H1 (cell line): ENCODE measurements at regions of chr20 and their contacts with region 1.

Region 1: DNA sequence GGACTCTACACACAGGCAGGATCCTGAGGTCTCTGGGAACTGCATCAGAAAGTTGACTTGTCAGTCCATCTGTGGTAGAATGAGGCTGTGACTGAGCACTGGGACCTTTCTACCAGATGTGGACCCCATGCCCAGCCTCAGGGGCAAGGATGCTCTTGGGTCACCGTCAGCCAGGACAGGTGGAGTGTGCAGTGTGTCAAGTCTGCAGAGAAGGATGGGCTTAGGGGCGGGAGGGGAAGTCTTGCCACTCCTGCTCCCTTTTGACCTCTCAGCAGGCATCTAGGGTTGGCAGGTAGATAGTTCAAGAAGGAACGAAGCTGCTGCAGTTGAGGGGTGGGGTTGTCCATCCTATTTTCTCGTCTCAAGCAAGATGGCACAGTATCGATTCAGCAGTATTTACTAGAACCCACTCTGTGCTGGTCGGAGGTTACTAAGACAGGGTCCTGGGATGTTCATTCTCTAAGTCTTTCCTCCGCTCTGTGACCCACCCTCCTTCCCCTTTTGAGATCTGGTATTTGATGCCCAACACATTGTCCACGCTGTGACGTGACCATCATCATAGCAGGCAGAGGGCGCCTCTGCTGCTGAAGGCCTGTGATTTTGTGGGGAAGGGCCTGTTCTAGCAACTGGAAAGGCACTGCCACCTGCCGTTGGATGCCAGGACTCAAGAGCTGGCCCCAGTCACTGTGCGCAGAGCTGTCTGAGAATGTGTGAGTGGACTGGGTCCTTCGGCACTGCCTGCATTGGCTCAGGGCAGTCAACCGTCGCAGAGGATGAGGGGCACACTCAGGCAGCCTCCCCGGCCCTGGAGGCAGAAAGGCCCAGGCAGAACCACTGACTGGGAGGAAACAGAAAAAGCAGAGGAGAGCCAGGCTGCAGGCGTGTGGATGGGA is 23.2 kb downstream of the RBCK1 start:
- DNase-seq: no peak
- H3K4me3 ChIP-seq: no peak overlapping the region
- H3K27ac ChIP-seq: no peak overlapping the region
- H3K4me1 ChIP-seq: peaks cover 0 to 13% (median 5%) of the 10 kb centered on the region in 4 experiments; a peak in 6 of 7 replicates
- H3K27me3 ChIP-seq: peaks cover 0 to 11% (median 3%) of the 10 kb centered on the region in 4 experiments; a peak in 4 of 7 replicates
- CTCF ChIP-seq: peak; percentile 71 to 96 (median 89)
- EP300 ChIP-seq: no peak
- POLR2A ChIP-seq: no peak
- RAD21 ChIP-seq: peak; percentile 68 to 79

Region 2: GRCh38 chr20:354298-355064 is 76.8 kb before region 1 on chr20:
- CTCF ChIA-PET with region 1: interaction called, 52 read pairs
- POLR2A ChIA-PET with region 1: interaction called, 3 read pairs
- DNase-seq: peak in 1 of 2 experiments; percentile 92
- H3K4me3 ChIP-seq: no peak overlapping the region
- H3K27ac ChIP-seq: no peak overlapping the region
- H3K4me1 ChIP-seq: peaks cover 0 to under 1% (median 0%) of the 10 kb centered on the region in 4 experiments; a peak in 1 of 7 replicates
- H3K27me3 ChIP-seq: no peaks in the 10 kb centered on the region
- CTCF ChIP-seq: peak; percentile 87 to 98 (median 96)
- EP300 ChIP-seq: no peak
- POLR2A ChIP-seq: no peak
- RAD21 ChIP-seq: peak; percentile 97

Region 3: GRCh38 chr20:362271-363254 is 68.7 kb before region 1 on chr20:
- CTCF ChIA-PET with region 1: interaction called, 20 read pairs
- POLR2A ChIA-PET with region 1: interaction called, 3 read pairs
- DNase-seq: no peak
- H3K4me3 ChIP-seq: no peak overlapping the region
- H3K27ac ChIP-seq: no peak overlapping the region
- H3K4me1 ChIP-seq: no peaks in the 10 kb centered on the region; a peak in 2 of 7 replicates
- H3K27me3 ChIP-seq: no peaks in the 10 kb centered on the region
- CTCF ChIP-seq: peak; percentile 44 to 54 (median 49)
- EP300 ChIP-seq: no peak
- POLR2A ChIP-seq: no peak
- RAD21 ChIP-seq: peak; percentile 44 to 58

Region 4: DNA sequence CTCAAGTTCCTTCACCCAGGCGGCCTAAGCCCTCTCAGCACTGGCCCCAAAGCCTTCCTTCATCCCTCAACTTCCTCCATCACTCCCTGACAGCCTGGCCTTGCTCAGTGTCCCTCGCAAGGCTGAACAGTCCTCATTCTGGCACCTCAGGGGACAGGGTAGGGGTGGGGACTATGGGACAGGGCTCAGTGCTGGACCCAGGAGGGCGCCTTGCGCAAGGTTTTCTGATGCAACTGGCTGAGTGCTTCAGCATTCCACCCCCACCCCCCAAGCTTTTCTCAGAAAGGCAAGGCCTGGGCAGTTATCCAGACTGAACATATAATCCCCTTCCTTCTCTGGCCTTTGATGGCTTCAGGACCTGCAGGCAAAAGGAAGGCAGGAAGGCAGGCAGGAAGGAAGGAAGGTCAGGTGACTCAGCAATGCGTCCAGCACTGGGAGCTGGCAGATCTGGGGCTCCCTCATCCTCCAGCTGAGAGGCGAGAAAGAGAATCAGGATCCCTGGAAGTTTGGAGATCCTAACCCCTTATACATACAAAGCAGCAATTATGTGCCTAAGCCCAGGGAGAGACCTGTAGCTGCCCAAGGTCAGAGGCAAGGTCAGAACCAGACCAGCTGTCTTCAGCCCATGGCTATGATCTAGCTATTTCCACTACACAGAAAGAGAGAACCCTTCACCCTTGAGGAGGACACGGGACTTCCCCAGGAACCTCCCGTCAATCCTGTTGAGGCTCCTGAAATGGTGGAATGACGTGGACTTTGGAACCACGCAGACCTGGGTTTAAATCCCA is 59.3 kb before region 1 on chr20:
- CTCF ChIA-PET with region 1: interaction called, 13 read pairs
- POLR2A ChIA-PET with region 1: no interaction called
- DNase-seq: no peak
- H3K4me3 ChIP-seq: no peak overlapping the region
- H3K27ac ChIP-seq: no peak overlapping the region
- H3K4me1 ChIP-seq: peaks cover 0 to 5% (median 0%) of the 10 kb centered on the region in 4 experiments; a peak in 2 of 7 replicates
- H3K27me3 ChIP-seq: no peaks in the 10 kb centered on the region; a peak in 1 of 7 replicates
- CTCF ChIP-seq: no peak
- EP300 ChIP-seq: no peak
- POLR2A ChIP-seq: no peak
- RAD21 ChIP-seq: no peak

Region 5: GRCh38 chr20:462199-462991 is 31.1 kb after region 1 on chr20 and contains the start of gene TBC1D20:
- CTCF ChIA-PET with region 1: interaction called, 8 read pairs
- POLR2A ChIA-PET with region 1: interaction called, 11 read pairs
- DNase-seq: peak; percentile 49 to 86
- H3K4me3 ChIP-seq: peak within 1 kb of the TSS; percentile 70 to 86 (median 82)
- H3K27ac ChIP-seq: peak within 1 kb of the TSS; percentile 41; the same call in 1 of the 2 replicates
- H3K4me1 ChIP-seq: peaks cover 0 to 4% (median 1%) of the 10 kb centered on the region in 4 experiments; a peak in 3 of 7 replicates
- H3K27me3 ChIP-seq: peaks cover 0 to 9% (median 7%) of the 10 kb centered on the region in 4 experiments; a peak in 3 of 7 replicates
- CTCF ChIP-seq: peak in 1 of 3 experiments; percentile 18; a peak in 1 of 4 replicates
- EP300 ChIP-seq: no peak; a peak in 1 of 3 replicates
- POLR2A ChIP-seq: peak; percentile 68 to 85; a peak in 2 of 3 replicates
- RAD21 ChIP-seq: no peak
- total RNA-seq, gene TBC1D20: 16.2 and 17.1 TPM in 2 replicates

Region 6: GRCh38 chr20:478949-479429 is 47.7 kb after region 1 on chr20:
- CTCF ChIA-PET with region 1: interaction called, 17 read pairs
- POLR2A ChIA-PET with region 1: interaction called, 5 read pairs
- DNase-seq: no peak
- H3K4me3 ChIP-seq: no peak overlapping the region
- H3K27ac ChIP-seq: no peak overlapping the region
- H3K4me1 ChIP-seq: no peaks in the 10 kb centered on the region
- H3K27me3 ChIP-seq: no peaks in the 10 kb centered on the region
- CTCF ChIP-seq: peak in 2 of 3 experiments; percentile 43 to 51; a peak in 2 of 4 replicates
- EP300 ChIP-seq: no peak
- POLR2A ChIP-seq: no peak
- RAD21 ChIP-seq: peak; percentile 50 to 60